ENCODE measurements at regions of chr20 and their contacts with region 1.

Region 1: DNA sequence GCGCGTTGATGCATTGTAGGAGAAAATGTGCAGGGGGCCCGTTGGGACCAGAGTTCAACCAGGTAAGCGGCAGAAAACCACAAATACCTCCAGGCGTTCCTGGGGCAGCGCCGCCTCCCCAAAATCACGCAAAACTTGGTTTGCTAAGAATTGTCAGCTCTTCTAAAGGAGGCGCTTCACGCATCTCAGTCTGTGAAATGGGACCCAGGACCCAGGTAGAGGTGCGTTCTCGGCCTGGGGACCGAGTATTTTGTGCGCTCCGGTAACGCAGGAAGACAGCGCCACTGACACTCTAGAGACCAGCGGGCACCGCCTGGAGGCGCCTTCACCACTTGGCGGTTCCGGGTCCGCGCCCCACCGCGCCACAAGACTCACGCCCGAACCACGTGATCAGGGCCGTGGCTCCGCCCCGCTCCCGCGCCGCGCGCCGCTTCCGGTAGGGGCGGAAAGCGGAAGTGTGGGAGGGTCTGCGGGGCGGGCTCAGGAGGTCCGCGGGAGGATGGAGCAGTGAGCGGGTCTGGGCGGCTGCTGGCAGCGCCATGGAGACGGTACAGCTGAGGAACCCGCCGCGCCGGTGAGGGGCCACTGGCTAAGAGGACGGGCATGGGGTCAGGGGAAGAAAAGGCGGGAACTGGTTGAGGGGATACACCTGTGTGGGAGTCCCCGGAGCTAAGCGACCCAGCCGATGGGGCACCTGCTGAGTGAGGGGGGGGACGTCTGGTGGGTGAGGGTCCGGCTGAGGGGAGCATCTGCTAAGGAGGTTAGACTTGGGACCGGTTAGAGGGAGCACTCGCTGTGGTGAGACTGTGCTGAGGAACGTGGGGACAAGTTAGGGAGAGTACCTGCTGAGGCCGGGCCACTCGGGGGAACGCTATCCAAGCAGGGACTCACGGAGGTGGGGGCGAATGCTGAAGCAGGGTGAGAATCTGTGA is at the start of gene STK4:
- DNase-seq: peak; percentile 92 to 99 (median 96)
- ATAC-seq: peak; percentile 78
- H3K4me3 ChIP-seq: peak within 1 kb of the TSS; percentile 68
- H3K4me3 Mint-ChIP-seq: peak within 1 kb of the TSS; percentile 92
- H3K27ac ChIP-seq: peak within 1 kb of the TSS; percentile 88 to 90
- H3K27ac Mint-ChIP-seq: peak within 1 kb of the TSS; percentile 86
- H3K4me1 ChIP-seq: peaks cover 16% of the 10 kb centered on the region
- H3K4me1 Mint-ChIP-seq: peaks cover 51% of the 10 kb centered on the region
- H3K27me3 ChIP-seq: no peaks in the 10 kb centered on the region
- H3K27me3 Mint-ChIP-seq: no peaks in the 10 kb centered on the region
- CTCF ChIP-seq: peak; percentile 70
- total RNA-seq, gene STK4: 265 to 277 TPM

Region 2: DNA sequence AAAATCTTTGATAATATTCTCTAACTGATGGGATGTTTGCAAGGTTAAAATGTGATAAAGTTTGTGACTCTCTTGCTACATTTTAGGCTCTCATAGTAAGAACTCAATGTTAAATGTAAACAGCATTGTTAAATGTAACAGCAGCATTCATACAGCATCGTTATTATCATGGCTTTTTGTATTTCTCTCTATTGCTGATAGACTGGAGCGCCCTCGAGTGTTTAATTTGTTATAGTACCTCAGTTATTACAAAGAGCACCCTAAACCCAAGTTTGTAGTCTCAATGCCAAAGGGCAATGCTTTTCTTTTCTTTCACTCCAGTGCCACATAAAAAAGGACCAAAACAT is 505.5 kb before region 1 on chr20:
- CTCF ChIA-PET with region 1: no interaction called
- POLR2A ChIA-PET with region 1: no interaction called
- intact Hi-C with region 1: no loop called
- DNase-seq: peak in 4 of 14 experiments; percentile 14 to 41 (median 31)
- ATAC-seq: no peak
- H3K4me3 ChIP-seq: no peak overlapping the region
- H3K4me3 Mint-ChIP-seq: no peak overlapping the region
- H3K27ac ChIP-seq: no peak overlapping the region
- H3K27ac Mint-ChIP-seq: no peak overlapping the region
- H3K4me1 ChIP-seq: no peaks in the 10 kb centered on the region
- H3K4me1 Mint-ChIP-seq: no peaks in the 10 kb centered on the region
- H3K27me3 ChIP-seq: no peaks in the 10 kb centered on the region
- H3K27me3 Mint-ChIP-seq: no peaks in the 10 kb centered on the region
- CTCF ChIP-seq: peak; percentile 43

Region 3: DNA sequence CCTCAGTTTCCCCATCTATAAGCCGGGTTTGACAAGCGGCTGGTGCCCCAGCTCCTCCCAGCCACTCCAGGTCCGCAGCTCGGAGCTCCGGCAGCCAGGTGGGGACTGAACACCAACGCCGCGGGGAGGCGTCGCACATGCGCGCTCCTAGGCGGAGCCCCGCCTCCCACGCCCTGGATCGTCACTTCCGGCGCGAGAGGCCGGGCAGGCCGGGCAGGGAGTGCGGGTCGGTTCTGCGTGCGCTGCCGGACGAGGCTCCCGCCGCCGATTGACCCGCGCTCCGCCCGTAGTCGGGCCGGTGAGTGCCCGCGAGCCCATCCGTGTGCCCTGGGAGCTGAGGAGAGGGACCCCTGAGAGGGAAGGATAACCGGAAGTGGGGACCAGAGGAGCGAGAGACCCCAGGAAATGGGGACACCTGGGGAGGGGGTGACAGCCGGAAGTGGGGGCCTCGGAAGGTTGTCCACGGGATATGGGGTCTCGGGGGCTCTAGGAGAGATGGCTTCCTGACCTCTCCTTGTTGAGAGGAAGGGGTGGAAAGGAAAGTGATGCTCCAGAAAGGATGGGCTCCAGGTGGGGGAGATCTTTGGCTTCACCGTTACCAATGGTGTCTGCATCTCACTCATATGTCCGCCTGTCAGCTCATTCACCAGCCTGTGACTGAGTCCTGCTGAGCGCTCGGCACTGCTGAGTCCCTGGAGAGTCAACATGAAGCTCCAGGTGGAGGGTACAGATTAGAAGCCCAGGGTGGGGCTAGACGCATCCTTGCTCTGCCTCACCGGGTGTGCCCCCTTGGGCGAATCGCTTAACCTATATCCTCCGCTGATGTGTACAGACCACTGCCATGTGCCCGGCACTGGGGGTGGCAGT is 490.4 kb before region 1 on chr20 and contains the start of gene TTPAL:
- CTCF ChIA-PET with region 1: no interaction called
- POLR2A ChIA-PET with region 1: no interaction called
- intact Hi-C with region 1: loop called in 1 of 2 experiments (anchors 10 kb)
- DNase-seq: peak; percentile 75 to 95 (median 86)
- ATAC-seq: peak; percentile 95
- H3K4me3 ChIP-seq: peak within 1 kb of the TSS; percentile 90
- H3K4me3 Mint-ChIP-seq: peak within 1 kb of the TSS; percentile 95
- H3K27ac ChIP-seq: peak within 1 kb of the TSS; percentile 89 to 98
- H3K27ac Mint-ChIP-seq: peak within 1 kb of the TSS; percentile 96
- H3K4me1 ChIP-seq: peaks cover 18% of the 10 kb centered on the region
- H3K4me1 Mint-ChIP-seq: peaks cover 26% of the 10 kb centered on the region
- H3K27me3 ChIP-seq: no peaks in the 10 kb centered on the region
- H3K27me3 Mint-ChIP-seq: no peaks in the 10 kb centered on the region
- CTCF ChIP-seq: no peak
- total RNA-seq, gene TTPAL: 9.0 to 9.9 TPM

Region 4: DNA sequence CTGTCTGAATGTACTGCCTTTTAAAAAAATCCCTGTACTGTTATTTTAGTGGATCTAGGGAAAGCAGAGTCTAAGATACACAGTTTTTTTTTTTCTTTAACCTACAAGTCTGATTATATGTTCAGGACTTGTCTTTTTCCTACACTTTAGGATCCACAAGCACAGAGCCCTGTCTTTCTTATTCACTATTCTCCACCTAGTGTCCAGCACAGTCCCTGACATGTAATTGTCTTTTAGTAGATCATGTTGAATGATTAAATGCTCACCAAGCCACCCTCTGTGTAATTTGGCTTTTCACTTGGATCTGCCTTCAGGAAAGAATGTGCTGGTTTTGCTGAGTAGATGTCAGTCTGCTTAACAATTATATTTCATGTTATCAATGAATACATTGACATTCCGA is 116.6 kb before region 1 on chr20:
- CTCF ChIA-PET with region 1: no interaction called
- POLR2A ChIA-PET with region 1: no interaction called
- intact Hi-C with region 1: no loop called
- DNase-seq: no peak
- ATAC-seq: no peak
- H3K4me3 ChIP-seq: no peak overlapping the region
- H3K4me3 Mint-ChIP-seq: no peak overlapping the region
- H3K27ac ChIP-seq: no peak overlapping the region
- H3K27ac Mint-ChIP-seq: no peak overlapping the region
- H3K4me1 ChIP-seq: no peaks in the 10 kb centered on the region
- H3K4me1 Mint-ChIP-seq: no peaks in the 10 kb centered on the region
- H3K27me3 ChIP-seq: peaks cover 2 to 4% of the 10 kb centered on the region in 2 experiments
- H3K27me3 Mint-ChIP-seq: peaks cover 20% of the 10 kb centered on the region
- CTCF ChIP-seq: no peak

Region 5: GRCh38 chr20:44979090-44979621 is 12.9 kb after region 1 on chr20:
- CTCF ChIA-PET with region 1: interaction called, 31 read pairs
- POLR2A ChIA-PET with region 1: interaction called, 180 read pairs
- intact Hi-C with region 1: loop called (anchors 1 to 2 kb)
- DNase-seq: peak in 13 of 14 experiments; percentile 35 to 94 (median 49)
- ATAC-seq: peak; percentile 85
- H3K4me3 ChIP-seq: peak overlapping the region; percentile 34
- H3K4me3 Mint-ChIP-seq: peak overlapping the region; percentile 83
- H3K27ac ChIP-seq: peak overlapping the region; percentile 90 to 95
- H3K27ac Mint-ChIP-seq: peak overlapping the region; percentile 96
- H3K4me1 ChIP-seq: peaks cover 56% of the 10 kb centered on the region
- H3K4me1 Mint-ChIP-seq: peaks cover 93% of the 10 kb centered on the region
- H3K27me3 ChIP-seq: no peaks in the 10 kb centered on the region
- H3K27me3 Mint-ChIP-seq: no peaks in the 10 kb centered on the region
- CTCF ChIP-seq: no peak

Region 6: DNA sequence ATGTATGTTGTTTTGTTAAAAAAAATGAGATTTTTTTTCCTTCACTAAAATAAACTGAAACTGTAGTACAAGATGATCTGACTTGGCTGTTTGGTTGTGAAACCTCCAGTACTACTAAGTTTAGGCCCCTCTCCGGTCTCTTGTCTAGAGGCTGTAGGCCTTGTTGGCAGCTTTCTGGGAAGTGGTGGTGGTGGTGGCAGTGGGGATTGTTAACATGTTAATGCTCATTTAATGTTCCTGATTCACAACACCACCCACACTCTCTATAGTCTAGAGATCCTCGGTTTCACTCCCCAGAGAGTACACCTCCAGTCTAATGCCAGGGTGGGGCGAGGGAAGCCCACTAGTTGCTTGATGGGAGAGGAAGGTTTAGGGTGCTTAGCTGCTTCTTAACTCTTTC is 24.1 kb after region 1 on chr20:
- CTCF ChIA-PET with region 1: interaction called, 10 read pairs
- POLR2A ChIA-PET with region 1: interaction called, 18 read pairs
- intact Hi-C with region 1: loop called in 1 of 2 experiments (anchors 2 kb)
- DNase-seq: peak in 4 of 14 experiments; percentile 22 to 46 (median 27)
- ATAC-seq: peak; percentile 50
- H3K4me3 ChIP-seq: peak overlapping the region; percentile 45
- H3K4me3 Mint-ChIP-seq: peak overlapping the region; percentile 88
- H3K27ac ChIP-seq: peak overlapping the region; percentile 62 to 66
- H3K27ac Mint-ChIP-seq: peak overlapping the region; percentile 88
- H3K4me1 ChIP-seq: peaks cover 41% of the 10 kb centered on the region
- H3K4me1 Mint-ChIP-seq: peaks cover 82% of the 10 kb centered on the region
- H3K27me3 ChIP-seq: no peaks in the 10 kb centered on the region
- H3K27me3 Mint-ChIP-seq: no peaks in the 10 kb centered on the region
- CTCF ChIP-seq: no peak

Region 7: DNA sequence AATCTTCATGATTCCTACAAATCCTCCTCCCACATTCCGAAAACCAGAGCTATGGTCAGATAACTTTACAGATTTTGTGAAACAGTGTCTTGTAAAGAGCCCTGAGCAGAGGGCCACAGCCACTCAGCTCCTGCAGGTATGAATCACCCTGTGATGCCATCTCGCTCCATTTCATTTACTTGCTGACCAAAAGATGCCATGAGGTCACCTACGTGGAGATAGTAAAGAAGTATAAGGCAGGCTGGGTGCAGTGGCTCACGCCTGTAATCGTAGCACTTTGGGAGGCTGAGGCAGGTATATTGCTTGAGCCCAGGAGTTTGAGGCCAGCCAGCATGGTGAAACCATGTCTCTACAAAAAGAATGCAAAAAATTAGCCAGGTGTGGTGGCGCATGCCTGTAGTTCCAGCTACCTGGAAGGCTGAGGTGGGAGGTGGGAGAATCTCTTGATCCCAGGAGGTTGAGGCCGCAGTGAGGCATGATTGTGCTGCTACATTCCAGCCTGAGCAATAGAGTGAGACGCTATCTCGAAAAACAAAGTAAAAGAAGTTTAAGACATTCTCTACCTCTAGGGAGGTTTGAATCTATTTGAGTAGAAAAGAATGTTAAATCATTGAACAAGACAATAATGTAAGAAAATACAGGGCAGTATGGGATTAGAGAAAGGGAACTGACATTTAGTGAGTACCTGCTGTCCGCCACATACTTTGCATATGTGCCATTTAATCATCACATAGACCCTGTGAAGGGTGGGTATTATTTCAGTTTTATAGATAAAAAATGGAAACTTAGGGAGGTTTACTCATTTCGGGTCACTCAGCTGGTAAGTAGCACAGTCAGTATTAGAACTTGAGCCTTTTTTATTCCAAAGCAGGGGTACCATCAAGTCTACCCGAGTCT is 31.1 kb after region 1 on chr20:
- CTCF ChIA-PET with region 1: interaction called, 4 read pairs
- POLR2A ChIA-PET with region 1: interaction called, 12 read pairs
- intact Hi-C with region 1: loop called in 1 of 2 experiments (anchors 5 kb)
- DNase-seq: no peak
- ATAC-seq: no peak
- H3K4me3 ChIP-seq: no peak overlapping the region
- H3K4me3 Mint-ChIP-seq: peak overlapping the region; percentile 4
- H3K27ac ChIP-seq: no peak overlapping the region
- H3K27ac Mint-ChIP-seq: peak overlapping the region; percentile 1
- H3K4me1 ChIP-seq: peaks cover 22% of the 10 kb centered on the region
- H3K4me1 Mint-ChIP-seq: peaks cover 89% of the 10 kb centered on the region
- H3K27me3 ChIP-seq: no peaks in the 10 kb centered on the region
- H3K27me3 Mint-ChIP-seq: no peaks in the 10 kb centered on the region
- CTCF ChIP-seq: no peak

Region 8: GRCh38 chr20:45415774-45416637 is 449.7 kb after region 1 on chr20 and contains the start of gene PIGT:
- CTCF ChIA-PET with region 1: no interaction called
- POLR2A ChIA-PET with region 1: no interaction called
- intact Hi-C with region 1: loop called in 1 of 2 experiments (anchors 10 kb)
- DNase-seq: peak; percentile 75 to 97 (median 86)
- ATAC-seq: peak; percentile 95
- H3K4me3 ChIP-seq: peak within 1 kb of the TSS; percentile 98
- H3K4me3 Mint-ChIP-seq: peak within 1 kb of the TSS; percentile 95
- H3K27ac ChIP-seq: peak within 1 kb of the TSS; percentile 81 to 88
- H3K27ac Mint-ChIP-seq: peak within 1 kb of the TSS; percentile 92
- H3K4me1 ChIP-seq: peaks cover 31% of the 10 kb centered on the region
- H3K4me1 Mint-ChIP-seq: peaks cover 49% of the 10 kb centered on the region
- H3K27me3 ChIP-seq: no peaks in the 10 kb centered on the region
- H3K27me3 Mint-ChIP-seq: no peaks in the 10 kb centered on the region
- CTCF ChIP-seq: no peak
- total RNA-seq, gene PIGT: 157 to 163 TPM

Measured in CD4-positive, alpha-beta T cell (primary cell).